Activated CD4-positive, alpha-beta T cell treated with anti-CD3 and anti-CD28 coated beads, Interleukin-2, amount 10 ng/mL, durations not matched to agents 24 days and 14 days (primary cell): ENCODE measurements at regions of chr11 and their contacts with region 1.

Region 1: GRCh38 chr11:121318848-121319834 is 26.6 kb downstream of the SC5D start:
- DNase-seq: peak; percentile 80
- H3K4me3 Mint-ChIP-seq: peak overlapping the region; percentile 0
- H3K27ac Mint-ChIP-seq: no peak overlapping the region
- H3K4me1 Mint-ChIP-seq: peaks cover 20% of the 10 kb centered on the region
- H3K27me3 Mint-ChIP-seq: no peaks in the 10 kb centered on the region

Region 2: DNA sequence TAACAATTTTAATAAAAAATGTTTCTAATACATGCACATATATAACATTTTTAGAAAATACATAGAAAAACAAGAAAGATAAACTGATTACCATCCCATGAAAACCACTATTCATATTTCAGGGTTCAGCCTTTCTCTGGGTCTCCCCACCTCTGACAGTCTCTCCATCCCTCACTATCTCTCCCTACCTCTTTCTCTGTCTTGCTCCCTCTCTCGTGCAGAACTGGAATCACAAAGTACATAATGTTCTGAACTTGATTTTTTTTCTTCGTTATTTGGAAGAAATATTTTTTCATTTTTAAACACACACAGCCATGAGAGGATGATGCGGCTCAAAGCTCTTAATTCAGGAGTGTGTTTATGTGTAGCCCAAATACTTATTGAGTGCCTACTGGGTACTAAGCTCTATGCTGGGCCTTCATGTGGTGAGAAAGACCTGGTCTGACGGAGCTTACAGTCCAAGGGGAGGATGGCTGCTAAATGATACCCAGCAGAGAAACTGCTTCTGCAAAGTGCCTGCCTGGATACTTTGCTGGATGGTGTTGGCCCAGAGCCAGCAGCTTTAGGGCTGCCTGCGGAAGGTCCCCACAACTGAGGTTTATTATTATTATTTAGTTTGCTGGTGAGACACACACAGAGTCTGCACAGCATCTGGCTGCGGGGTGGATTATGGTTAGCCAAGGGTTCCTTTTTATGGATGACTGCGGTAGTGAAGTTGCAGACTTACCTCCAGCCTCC is 16.0 kb after region 1 on chr11:
- intact Hi-C with region 1: no loop called
- DNase-seq: no peak
- H3K4me3 Mint-ChIP-seq: no peak overlapping the region
- H3K27ac Mint-ChIP-seq: no peak overlapping the region
- H3K4me1 Mint-ChIP-seq: peaks cover 35% of the 10 kb centered on the region
- H3K27me3 Mint-ChIP-seq: peaks cover 7% of the 10 kb centered on the region

Region 3: GRCh38 chr11:121591405-121592033 is 272.4 kb after region 1 on chr11:
- intact Hi-C with region 1: loop called (anchors 1 kb)
- DNase-seq: peak; percentile 93
- H3K4me3 Mint-ChIP-seq: no peak overlapping the region
- H3K27ac Mint-ChIP-seq: no peak overlapping the region
- H3K4me1 Mint-ChIP-seq: peaks cover 19% of the 10 kb centered on the region
- H3K27me3 Mint-ChIP-seq: no peaks in the 10 kb centered on the region